ENCODE measurements at regions of chr11 and their contacts with region 1.

Region 1: GRCh38 chr11:36868380-36868779 is 270.3 kb upstream of the RAG2 start:
- DNase-seq: peak; percentile 24
- H3K4me3 ChIP-seq: no peak overlapping the region
- H3K27ac ChIP-seq: no peak overlapping the region
- H3K4me1 ChIP-seq: no peaks in the 10 kb centered on the region
- H3K27me3 ChIP-seq: no peaks in the 10 kb centered on the region
- CTCF ChIP-seq: no peak

Region 2: GRCh38 chr11:36774603-36775002 is 93.8 kb before region 1 on chr11:
- CTCF ChIA-PET with region 1: no interaction called
- dilution Hi-C with region 1: no loop called
- in situ Hi-C with region 1: no loop called
- intact Hi-C with region 1: loop called (anchors 1 kb)
- DNase-seq: peak; percentile 92
- H3K4me3 ChIP-seq: no peak overlapping the region
- H3K27ac ChIP-seq: peak overlapping the region; percentile 63
- H3K4me1 ChIP-seq: peaks cover 15% of the 10 kb centered on the region
- H3K27me3 ChIP-seq: peaks cover under 1% of the 10 kb centered on the region
- CTCF ChIP-seq: no peak